CD4-positive, alpha-beta T cell (primary cell): ENCODE measurements at regions of chrX and their contacts with region 1.

Region 1: DNA sequence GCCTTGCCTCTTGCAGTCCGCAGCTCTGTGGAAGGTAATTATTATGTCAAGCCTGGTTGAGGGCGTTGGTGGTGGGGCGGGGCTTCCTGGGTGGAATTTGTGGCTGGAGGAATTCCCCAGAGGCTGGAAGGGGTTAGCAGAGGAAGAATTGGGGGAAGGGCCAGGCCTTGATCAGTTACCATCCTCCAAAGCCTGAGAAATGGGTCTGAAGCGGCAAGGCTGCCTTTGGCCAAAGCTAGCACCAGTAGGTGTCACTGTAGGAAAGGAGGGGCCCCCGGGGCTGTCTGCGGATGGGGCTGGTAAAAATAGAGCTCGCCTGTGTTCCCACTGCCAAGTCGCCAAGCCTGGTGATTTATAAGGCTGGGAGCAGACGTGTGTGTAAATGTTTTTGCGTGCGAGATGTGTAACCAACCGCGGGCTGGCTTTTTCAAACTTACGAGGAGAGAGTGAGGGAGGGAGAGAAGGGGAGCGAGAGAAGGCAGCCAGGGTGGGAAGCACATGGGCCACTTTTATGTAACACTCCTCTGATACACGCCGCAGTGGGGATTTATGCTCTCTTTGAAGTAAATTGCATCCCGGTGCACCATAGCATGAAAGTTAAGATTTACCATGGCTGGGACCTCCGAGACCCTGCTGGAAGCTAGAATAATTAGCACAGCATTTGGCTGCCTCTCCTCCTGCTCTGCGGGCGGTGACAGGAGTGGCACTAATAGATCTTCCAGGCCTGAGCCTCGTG is 366.9 kb downstream of the BCOR start:
- DNase-seq: peak; percentile 25 to 72 (median 50)
- ATAC-seq: peak; percentile 84
- H3K4me3 ChIP-seq: no peak overlapping the region
- H3K4me3 Mint-ChIP-seq: peak overlapping the region; percentile 55
- H3K27ac ChIP-seq: no peak overlapping the region
- H3K27ac Mint-ChIP-seq: peak overlapping the region; percentile 11
- H3K4me1 ChIP-seq: peaks cover 12% of the 10 kb centered on the region
- H3K4me1 Mint-ChIP-seq: peaks cover 7% of the 10 kb centered on the region
- H3K27me3 ChIP-seq: no peaks in the 10 kb centered on the region
- H3K27me3 Mint-ChIP-seq: no peaks in the 10 kb centered on the region
- CTCF ChIP-seq: peak; percentile 55

Region 2: DNA sequence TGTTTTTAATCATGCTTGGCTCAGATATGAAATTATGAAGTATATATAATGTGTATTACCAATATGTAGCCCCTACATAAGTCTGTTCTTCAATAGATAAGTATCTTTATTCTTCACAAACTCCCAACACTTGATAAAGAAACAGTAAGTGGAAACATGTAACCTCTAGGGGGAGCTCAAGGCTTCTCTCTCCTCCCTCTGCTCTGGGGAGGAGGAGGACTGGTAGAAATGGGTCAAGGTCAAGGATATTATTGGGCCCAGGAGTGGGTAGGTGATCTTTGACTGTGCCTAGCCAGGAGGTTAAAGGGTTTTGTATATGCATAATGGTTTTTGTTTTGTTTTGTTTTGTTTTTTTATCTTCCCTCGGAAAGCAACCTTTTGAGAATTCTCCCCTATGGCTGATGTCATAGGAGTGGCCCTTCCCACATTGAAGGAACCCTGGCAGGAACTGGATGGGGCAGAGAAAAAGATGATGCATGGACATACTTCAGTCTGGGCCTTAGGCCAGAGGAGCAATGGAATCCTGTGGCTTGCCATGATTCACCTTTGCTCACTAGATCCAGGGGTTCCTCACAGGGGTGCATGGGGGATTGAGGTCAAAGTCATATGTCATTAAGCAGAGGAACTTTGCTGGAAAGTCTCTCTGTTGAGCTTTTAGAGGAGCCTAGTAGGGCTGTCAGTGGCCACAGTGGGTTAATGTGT is 469.2 kb before region 1 on chrX:
- CTCF ChIA-PET with region 1: no interaction called
- POLR2A ChIA-PET with region 1: no interaction called
- intact Hi-C with region 1: loop called in 1 of 2 experiments (anchors 10 kb)
- DNase-seq: peak in 7 of 14 experiments; percentile 1 to 68 (median 50)
- ATAC-seq: peak; percentile 60
- H3K4me3 ChIP-seq: no peak overlapping the region
- H3K4me3 Mint-ChIP-seq: no peak overlapping the region
- H3K27ac ChIP-seq: no peak overlapping the region
- H3K27ac Mint-ChIP-seq: no peak overlapping the region
- H3K4me1 ChIP-seq: no peaks in the 10 kb centered on the region
- H3K4me1 Mint-ChIP-seq: peaks cover 11% of the 10 kb centered on the region
- H3K27me3 ChIP-seq: no peaks in the 10 kb centered on the region
- H3K27me3 Mint-ChIP-seq: no peaks in the 10 kb centered on the region
- CTCF ChIP-seq: peak; percentile 59

Region 3: DNA sequence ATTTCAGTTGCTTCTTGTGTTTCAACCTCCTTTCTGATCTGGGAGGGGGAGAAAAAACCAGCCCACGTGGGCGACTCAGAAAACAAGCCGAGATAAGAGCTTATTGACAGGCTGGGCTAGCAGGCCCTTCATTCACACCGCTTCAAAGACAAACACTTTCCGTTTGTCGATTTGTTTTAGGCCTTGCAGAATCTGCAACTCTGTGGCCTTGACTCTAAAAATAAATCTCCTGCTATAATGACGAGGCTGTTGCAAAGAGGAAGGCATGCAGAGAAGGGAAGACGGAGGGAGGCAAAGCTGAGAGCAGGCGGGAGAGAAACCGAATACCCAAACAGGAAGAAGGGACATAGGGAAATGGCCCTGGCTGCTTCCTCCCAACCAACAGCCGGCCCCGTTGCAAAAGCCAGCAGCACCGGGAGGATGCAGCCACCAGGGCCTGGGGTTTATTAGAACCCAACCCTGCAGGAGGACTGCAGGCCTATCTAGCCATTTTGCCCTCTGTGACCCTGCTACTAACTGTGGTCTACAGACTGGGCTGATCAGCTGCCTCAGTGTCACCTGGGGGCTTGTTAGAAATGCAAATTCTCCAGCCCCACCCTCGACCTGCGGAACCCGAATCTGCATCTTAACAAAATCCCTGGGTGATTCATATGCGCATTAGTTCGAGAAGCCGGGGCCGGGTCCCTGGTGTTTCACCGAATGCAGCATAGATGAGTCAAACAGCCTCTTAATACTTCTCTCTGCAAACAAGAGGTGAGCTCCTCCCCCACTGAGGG is 41.4 kb after region 1 on chrX:
- CTCF ChIA-PET with region 1: no interaction called
- POLR2A ChIA-PET with region 1: interaction called, 8 read pairs
- intact Hi-C with region 1: loop called in 1 of 2 experiments (anchors 2 kb)
- DNase-seq: peak; percentile 4 to 77 (median 58)
- ATAC-seq: peak; percentile 57
- H3K4me3 ChIP-seq: no peak overlapping the region
- H3K4me3 Mint-ChIP-seq: peak overlapping the region; percentile 57
- H3K27ac ChIP-seq: peak overlapping the region; percentile 59 to 64
- H3K27ac Mint-ChIP-seq: peak overlapping the region; percentile 99
- H3K4me1 ChIP-seq: peaks cover 60% of the 10 kb centered on the region
- H3K4me1 Mint-ChIP-seq: peaks cover 57% of the 10 kb centered on the region
- H3K27me3 ChIP-seq: no peaks in the 10 kb centered on the region
- H3K27me3 Mint-ChIP-seq: no peaks in the 10 kb centered on the region
- CTCF ChIP-seq: no peak

Region 4: DNA sequence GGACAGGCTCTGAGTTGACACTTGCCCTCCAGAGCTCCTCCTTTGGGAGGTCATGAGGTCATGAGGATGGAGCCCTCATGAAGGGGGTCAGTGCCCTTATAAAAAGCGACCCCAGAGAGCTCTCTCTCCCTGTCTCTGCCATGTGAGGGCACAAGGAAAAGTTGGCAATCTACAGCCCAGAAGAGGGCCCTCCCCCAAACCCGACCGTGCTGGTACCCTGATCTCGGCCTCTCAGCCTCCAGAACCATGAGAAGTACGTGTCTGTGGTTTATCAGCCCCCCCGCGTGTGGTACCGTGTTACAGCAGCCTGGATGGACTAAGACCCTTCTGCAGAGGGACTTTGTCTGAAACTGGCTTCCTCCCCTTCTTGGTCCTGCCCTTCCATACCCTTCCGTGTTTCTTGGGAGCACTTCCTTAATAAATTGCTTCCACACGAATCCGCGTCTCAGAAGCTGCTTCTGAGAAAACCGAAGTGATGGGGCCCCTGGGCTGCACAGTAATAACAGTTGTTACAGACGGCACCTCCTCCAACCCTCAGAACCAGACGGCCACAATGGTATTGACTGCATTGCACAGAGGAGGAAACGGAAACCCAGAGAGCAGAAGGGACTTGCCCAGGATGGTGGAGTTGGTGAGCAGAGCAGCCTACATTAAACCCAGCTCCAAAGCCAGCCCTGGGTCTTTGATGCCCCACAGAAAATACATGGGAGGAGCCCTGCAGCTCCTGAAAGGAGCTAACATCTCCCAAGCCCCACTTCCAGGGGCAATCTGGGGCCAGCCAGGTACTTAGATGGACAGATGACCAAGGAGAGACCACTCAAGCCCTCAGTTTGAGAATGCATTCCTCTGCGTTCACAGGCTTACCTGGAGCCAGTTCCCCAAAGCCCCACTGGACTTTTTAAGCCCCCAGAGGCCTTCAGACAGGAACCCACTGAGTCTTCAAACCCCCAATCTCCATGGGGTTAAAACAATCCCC is 124.2 kb after region 1 on chrX:
- CTCF ChIA-PET with region 1: interaction called, 8 read pairs
- POLR2A ChIA-PET with region 1: no interaction called
- intact Hi-C with region 1: loop called in 1 of 2 experiments (anchors 5 kb)
- DNase-seq: peak; percentile 55 to 93 (median 66)
- ATAC-seq: peak; percentile 86
- H3K4me3 ChIP-seq: peak overlapping the region; percentile 44
- H3K4me3 Mint-ChIP-seq: peak overlapping the region; percentile 82
- H3K27ac ChIP-seq: peak overlapping the region; percentile 92 to 97
- H3K27ac Mint-ChIP-seq: peak overlapping the region; percentile 96
- H3K4me1 ChIP-seq: peaks cover 79% of the 10 kb centered on the region
- H3K4me1 Mint-ChIP-seq: peaks cover 68% of the 10 kb centered on the region
- H3K27me3 ChIP-seq: no peaks in the 10 kb centered on the region
- H3K27me3 Mint-ChIP-seq: no peaks in the 10 kb centered on the region
- CTCF ChIP-seq: no peak

Region 5: DNA sequence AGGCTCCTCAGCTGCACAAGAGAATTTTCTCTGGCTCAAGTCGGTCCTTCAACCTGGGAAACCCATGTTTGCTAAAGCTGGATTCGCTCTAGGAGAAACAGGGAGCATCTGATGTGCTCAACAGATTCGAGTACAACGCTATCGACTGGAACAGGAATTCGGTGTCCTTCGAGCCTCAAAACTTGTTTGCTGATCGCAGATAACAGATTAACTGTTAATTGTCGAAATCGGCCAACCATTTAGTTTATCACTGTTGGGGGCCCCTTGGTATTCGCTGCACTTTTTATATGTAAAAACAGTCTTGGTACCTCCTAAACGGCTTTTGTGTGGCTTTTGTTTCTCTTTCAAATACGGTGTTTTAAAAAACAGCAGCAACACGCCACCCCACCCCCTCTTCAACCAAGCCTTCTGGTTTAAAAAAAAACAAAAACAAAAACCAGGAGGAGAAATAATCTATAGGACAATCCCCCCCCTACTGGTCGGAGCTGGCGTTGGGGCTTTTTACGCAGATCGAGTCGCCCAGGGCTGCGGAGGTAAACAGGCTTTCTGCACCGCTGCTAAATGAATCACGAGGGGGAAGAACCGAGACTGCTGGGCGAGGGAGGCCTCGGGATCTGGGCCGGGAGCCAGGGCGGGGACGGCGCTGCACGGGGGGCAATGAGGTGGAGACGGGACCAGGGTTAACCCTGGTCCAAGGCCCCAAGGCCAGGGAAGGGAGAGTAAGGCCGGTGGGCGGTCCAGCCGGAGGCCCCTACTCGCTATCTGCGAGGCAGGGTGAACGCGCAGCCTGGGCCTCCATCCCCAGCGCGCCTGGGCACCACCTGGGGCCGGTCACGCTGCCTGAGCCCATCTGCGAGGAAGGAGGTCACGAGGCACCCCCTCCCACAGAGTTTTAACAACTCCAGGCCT is 438.6 kb after region 1 on chrX:
- CTCF ChIA-PET with region 1: no interaction called
- POLR2A ChIA-PET with region 1: no interaction called
- intact Hi-C with region 1: loop called in 1 of 2 experiments (anchors 10 kb)
- DNase-seq: peak; percentile 64 to 91 (median 78)
- ATAC-seq: peak; percentile 65
- H3K4me3 ChIP-seq: peak overlapping the region; percentile 73
- H3K4me3 Mint-ChIP-seq: peak overlapping the region; percentile 90
- H3K27ac ChIP-seq: peak overlapping the region; percentile 75 to 96
- H3K27ac Mint-ChIP-seq: peak overlapping the region; percentile 100
- H3K4me1 ChIP-seq: peaks cover 77% of the 10 kb centered on the region
- H3K4me1 Mint-ChIP-seq: peaks cover 57% of the 10 kb centered on the region
- H3K27me3 ChIP-seq: no peaks in the 10 kb centered on the region
- H3K27me3 Mint-ChIP-seq: no peaks in the 10 kb centered on the region
- CTCF ChIP-seq: peak; percentile 28

Region 6: GRCh38 chrX:40468033-40468846 is 737.4 kb after region 1 on chrX:
- CTCF ChIA-PET with region 1: no interaction called
- POLR2A ChIA-PET with region 1: no interaction called
- intact Hi-C with region 1: loop called in 1 of 2 experiments (anchors 2 kb)
- DNase-seq: peak in 8 of 14 experiments; percentile 4 to 60 (median 38)
- ATAC-seq: peak; percentile 52
- H3K4me3 ChIP-seq: no peak overlapping the region
- H3K4me3 Mint-ChIP-seq: no peak overlapping the region
- H3K27ac ChIP-seq: no peak overlapping the region
- H3K27ac Mint-ChIP-seq: no peak overlapping the region
- H3K4me1 ChIP-seq: peaks cover 27% of the 10 kb centered on the region
- H3K4me1 Mint-ChIP-seq: peaks cover 41% of the 10 kb centered on the region
- H3K27me3 ChIP-seq: no peaks in the 10 kb centered on the region
- H3K27me3 Mint-ChIP-seq: no peaks in the 10 kb centered on the region
- CTCF ChIP-seq: peak; percentile 19